Posterior cingulate gyrus (tissue), 11 donors: ENCODE measurements at regions of chr17 and their contacts with region 1.

Region 1: GRCh38 chr17:6279659-6280058 is 155.3 kb downstream of the AIPL1 start:
- DNase-seq: no peak

Region 2: GRCh38 chr17:5667871-5668270 is 611.8 kb before region 1 on chr17:
- intact Hi-C with region 1: no loop called
- DNase-seq: no peak

Region 3: GRCh38 chr17:6204203-6204722 is 75.4 kb before region 1 on chr17:
- intact Hi-C with region 1: loop called (anchors 10 kb)
- DNase-seq: no peak

Region 4: GRCh38 chr17:6548578-6549330 is 269.1 kb after region 1 on chr17:
- intact Hi-C with region 1: no loop called
- DNase-seq: peak in 5 of 10 donors; percentile 43 to 90 (median 85)